Activated CD4-positive, alpha-beta T cell treated with anti-CD3 and anti-CD28 coated beads for 36 hours (primary cell): ENCODE measurements at regions of chr5 and their contacts with region 1.

Region 1: GRCh38 chr5:95760273-95761191 is 29.4 kb downstream of the RHOBTB3 start:
- DNase-seq: peak; percentile 29
- ATAC-seq: peak; percentile 91
- H3K4me3 Mint-ChIP-seq: peak overlapping the region; percentile 52
- H3K27ac Mint-ChIP-seq: peak overlapping the region; percentile 69
- H3K4me1 Mint-ChIP-seq: peaks cover 27% of the 10 kb centered on the region
- H3K27me3 Mint-ChIP-seq: no peaks in the 10 kb centered on the region

Region 2: GRCh38 chr5:95471942-95472341 is 288.6 kb before region 1 on chr5:
- CTCF ChIA-PET with region 1: no interaction called
- POLR2A ChIA-PET with region 1: no interaction called
- intact Hi-C with region 1: no loop called
- DNase-seq: no peak
- ATAC-seq: no peak
- H3K4me3 Mint-ChIP-seq: no peak overlapping the region
- H3K27ac Mint-ChIP-seq: no peak overlapping the region
- H3K4me1 Mint-ChIP-seq: no peaks in the 10 kb centered on the region
- H3K27me3 Mint-ChIP-seq: no peaks in the 10 kb centered on the region

Region 3: GRCh38 chr5:95712347-95712958 is 48.1 kb before region 1 on chr5:
- CTCF ChIA-PET with region 1: interaction called, 3 read pairs
- POLR2A ChIA-PET with region 1: no interaction called
- intact Hi-C with region 1: loop called (anchors 1 to 2 kb)
- DNase-seq: peak; percentile 78
- ATAC-seq: peak; percentile 95
- H3K4me3 Mint-ChIP-seq: no peak overlapping the region
- H3K27ac Mint-ChIP-seq: no peak overlapping the region
- H3K4me1 Mint-ChIP-seq: peaks cover 21% of the 10 kb centered on the region
- H3K27me3 Mint-ChIP-seq: peaks cover 4% of the 10 kb centered on the region

Region 4: DNA sequence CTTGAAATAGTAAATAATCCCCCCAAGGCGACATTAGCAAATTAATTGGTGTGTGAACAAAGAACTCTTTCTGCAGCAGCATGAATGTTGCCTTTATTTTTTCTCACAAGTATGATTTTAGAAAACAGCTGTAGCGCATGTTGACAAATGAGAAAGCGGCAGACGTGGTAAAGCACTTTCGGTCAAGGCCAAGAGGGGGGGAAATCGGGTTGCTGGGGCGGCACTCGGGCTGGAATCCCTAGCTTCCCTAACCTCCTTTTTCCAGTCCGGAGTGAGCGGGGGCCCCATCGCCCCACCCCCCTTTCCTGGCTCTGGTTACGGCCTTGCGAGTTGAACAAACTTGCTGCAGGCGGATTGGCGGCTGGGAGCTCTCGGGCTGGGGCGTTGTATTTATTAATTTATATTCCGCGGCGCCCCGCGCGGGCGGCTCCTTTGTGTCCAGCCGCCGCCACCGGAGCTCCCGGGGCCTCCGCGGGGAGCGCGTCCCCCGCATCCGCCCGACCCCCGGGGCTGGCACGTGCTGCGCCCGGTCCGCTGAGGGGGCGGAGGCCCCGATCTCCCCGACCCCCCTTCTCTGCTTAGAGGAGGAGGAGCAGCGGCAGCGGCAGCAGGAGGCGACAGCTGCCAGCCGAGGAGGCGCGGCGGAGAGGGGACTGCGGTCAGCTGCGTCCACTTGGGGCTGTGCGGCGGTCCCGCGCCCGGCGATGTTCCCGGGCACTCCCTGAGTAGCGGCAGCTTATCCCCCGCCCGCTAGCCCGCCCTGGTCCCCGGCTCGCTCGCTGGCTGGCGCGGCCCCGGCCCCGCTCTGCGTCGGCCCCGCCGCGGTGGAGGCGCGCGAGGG is 29.6 kb before region 1 on chr5 and contains the start of gene RHOBTB3:
- CTCF ChIA-PET with region 1: interaction called, 4 read pairs
- POLR2A ChIA-PET with region 1: no interaction called
- intact Hi-C with region 1: loop called in 1 of 2 experiments (anchors 2 kb)
- DNase-seq: peak; percentile 62
- ATAC-seq: peak; percentile 52
- H3K4me3 Mint-ChIP-seq: peak within 1 kb of the TSS; percentile 75
- H3K27ac Mint-ChIP-seq: peak within 1 kb of the TSS; percentile 72
- H3K4me1 Mint-ChIP-seq: peaks cover 64% of the 10 kb centered on the region
- H3K27me3 Mint-ChIP-seq: peaks cover 33% of the 10 kb centered on the region
- total RNA-seq, gene RHOBTB3: 3.3 to 3.5 TPM